ENCODE measurements at regions of chr5 and their contacts with region 1.

Region 1: DNA sequence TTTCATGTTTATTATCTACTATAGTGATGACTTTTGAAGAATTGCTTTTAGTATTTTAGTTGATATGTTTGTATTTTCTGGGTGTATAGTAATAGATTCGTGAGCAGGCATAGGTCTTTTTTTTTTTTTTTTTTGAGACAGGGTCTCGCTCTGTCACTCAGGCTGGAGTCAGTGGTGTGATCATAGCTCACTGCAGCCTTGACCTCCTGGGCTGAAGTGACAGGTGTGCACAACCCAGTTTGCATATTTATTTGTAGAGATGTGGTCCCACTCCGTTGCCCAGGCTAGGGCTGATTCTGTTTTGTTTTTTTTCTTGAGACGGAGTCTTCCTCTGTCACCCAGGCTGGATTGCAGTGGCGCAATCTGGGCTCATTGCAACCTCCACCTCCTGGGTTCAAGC is 11.9 kb downstream of the ERBIN start:
- DNase-seq: no peak
- H3K4me3 ChIP-seq: no peak overlapping the region
- H3K27ac ChIP-seq: no peak overlapping the region
- H3K4me1 ChIP-seq: peaks cover 45% of the 10 kb centered on the region
- H3K27me3 ChIP-seq: no peaks in the 10 kb centered on the region
- CTCF ChIP-seq: no peak

Region 2: DNA sequence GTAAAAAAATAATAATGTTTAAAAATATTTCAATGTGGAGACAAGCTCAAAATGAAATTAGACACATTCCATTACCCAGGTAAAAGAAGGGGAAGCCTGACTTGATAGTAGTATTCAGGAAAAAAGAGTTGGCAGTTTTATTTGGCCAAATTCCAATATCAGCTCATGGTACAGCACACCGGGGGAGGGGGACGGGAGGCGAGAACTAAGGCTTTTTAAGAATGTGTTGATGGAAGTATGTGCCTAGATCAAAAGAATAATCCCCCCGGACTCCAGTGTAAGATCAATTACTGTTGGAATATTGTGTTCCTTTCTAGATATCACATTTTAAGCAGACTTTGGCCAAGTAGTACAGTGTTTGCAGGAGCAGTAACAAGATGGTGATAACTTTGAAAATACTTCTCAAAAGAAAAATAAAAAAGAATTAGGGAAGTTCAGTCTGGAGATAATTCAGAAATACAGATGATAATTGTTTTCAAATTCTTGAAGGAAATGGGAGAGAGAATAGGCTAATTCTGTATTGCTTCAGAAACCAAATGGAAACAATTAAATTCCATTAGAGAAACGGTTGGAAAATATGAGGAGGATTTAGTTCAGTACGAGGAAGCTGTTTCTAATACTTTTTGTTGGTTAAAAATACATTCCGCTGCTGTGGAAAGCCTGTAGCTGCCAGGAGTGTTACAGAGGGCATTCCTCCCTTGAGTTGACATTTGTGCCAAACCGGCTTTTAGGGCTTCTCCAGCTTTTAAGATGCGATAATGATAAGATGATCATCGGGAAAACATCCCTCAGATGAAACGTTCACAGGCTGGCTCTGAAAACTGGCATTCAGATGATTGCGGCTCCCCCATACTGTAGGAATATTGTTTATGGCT is 110.0 kb before region 1 on chr5:
- intact Hi-C with region 1: no loop called
- DNase-seq: no peak
- H3K4me3 ChIP-seq: no peak overlapping the region
- H3K27ac ChIP-seq: no peak overlapping the region
- H3K4me1 ChIP-seq: no peaks in the 10 kb centered on the region
- H3K27me3 ChIP-seq: no peaks in the 10 kb centered on the region
- CTCF ChIP-seq: no peak

Region 3: DNA sequence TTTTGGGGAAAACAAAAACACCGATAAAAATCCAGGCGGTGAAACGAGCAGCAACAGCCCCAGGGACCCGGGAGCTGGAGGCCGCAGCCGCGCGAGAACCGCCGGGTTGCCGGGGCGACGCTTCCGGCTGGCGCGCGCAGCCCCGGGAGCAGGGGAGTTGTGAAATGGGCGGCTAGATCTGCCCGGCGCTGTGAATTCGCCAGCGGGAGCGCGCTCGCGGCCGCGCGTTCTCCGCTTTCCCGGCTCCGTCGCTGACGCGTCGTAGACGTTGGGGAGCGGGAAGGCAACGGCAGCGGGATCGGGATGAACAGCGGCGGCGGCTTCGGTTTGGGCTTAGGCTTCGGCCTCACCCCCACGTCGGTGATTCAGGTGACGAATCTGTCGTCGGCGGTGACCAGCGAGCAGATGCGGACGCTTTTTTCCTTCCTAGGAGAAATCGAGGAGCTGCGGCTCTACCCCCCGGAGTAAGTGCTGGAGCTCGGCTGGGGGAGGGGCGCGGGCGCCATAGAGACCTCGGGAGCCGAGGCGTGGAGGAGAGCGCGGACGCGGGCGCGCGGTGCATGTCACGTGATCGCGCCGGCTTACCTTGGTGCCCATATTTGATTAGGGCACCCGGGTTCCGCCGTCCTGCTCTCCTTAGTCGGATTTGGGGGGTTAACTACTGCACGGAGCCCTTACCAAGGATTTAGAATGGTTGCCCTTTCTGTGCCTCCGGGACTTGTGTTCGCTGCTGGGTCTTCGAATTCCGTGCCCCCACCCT is 206.0 kb after region 1 on chr5 and contains the start of gene SREK1:
- intact Hi-C with region 1: loop called (anchors 10 kb)
- DNase-seq: peak; percentile 94
- H3K4me3 ChIP-seq: peak within 1 kb of the TSS; percentile 82
- H3K27ac ChIP-seq: peak within 1 kb of the TSS; percentile 99
- H3K4me1 ChIP-seq: peaks cover 52% of the 10 kb centered on the region
- H3K27me3 ChIP-seq: no peaks in the 10 kb centered on the region
- CTCF ChIP-seq: no peak
- total RNA-seq, gene SREK1: 33.5 TPM

Measured in left ventricle myocardium inferior (tissue), 1 donor.